PC-9 (cell line): ENCODE measurements at regions of chr17 and their contacts with region 1.

Region 1: DNA sequence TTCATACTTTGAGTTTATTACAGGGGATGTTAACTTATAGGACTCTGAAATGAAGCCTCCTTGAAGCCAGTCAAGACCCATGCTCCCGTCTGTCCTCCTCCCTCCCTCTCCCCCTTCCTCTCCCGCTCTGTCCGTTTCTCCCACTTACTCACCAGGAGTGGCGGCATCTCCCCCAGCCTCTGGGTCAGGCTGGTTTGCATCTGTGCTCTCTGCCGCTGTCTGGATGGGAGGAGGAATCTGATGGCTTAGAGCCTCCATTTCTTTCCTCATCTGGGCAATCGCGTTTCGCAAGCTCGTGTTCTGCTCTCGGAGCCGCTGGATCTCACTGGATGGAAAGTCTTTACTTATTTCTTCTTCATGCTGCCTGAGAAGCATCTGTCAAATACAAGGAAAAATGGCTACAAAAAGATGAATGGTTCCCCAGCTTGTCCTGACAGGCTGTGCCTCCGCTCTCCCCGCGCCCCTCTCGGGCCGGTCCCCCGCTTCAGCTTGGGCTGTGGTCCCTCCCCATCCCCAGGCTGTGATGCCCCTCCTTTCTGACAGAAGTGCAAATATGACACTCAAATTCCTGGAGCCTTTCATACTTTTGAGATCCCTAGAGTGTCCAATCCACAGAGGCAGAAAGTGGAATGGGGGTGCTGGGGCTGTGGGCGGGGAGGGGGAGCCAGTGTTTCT is 40.0 kb downstream of the CCDC57 start:
- DNase-seq: no peak
- H3K4me3 ChIP-seq: no peak overlapping the region
- H3K27ac ChIP-seq: no peak overlapping the region
- H3K4me1 ChIP-seq: no peaks in the 10 kb centered on the region
- H3K27me3 ChIP-seq: no peaks in the 10 kb centered on the region
- CTCF ChIP-seq: no peak

Region 2: GRCh38 chr17:82120148-82120547 is 52.5 kb before region 1 on chr17:
- CTCF ChIA-PET with region 1: no interaction called
- POLR2A ChIA-PET with region 1: no interaction called
- intact Hi-C with region 1: no loop called
- DNase-seq: no peak
- H3K4me3 ChIP-seq: no peak overlapping the region
- H3K27ac ChIP-seq: no peak overlapping the region
- H3K4me1 ChIP-seq: no peaks in the 10 kb centered on the region
- H3K27me3 ChIP-seq: no peaks in the 10 kb centered on the region
- CTCF ChIP-seq: no peak

Region 3: DNA sequence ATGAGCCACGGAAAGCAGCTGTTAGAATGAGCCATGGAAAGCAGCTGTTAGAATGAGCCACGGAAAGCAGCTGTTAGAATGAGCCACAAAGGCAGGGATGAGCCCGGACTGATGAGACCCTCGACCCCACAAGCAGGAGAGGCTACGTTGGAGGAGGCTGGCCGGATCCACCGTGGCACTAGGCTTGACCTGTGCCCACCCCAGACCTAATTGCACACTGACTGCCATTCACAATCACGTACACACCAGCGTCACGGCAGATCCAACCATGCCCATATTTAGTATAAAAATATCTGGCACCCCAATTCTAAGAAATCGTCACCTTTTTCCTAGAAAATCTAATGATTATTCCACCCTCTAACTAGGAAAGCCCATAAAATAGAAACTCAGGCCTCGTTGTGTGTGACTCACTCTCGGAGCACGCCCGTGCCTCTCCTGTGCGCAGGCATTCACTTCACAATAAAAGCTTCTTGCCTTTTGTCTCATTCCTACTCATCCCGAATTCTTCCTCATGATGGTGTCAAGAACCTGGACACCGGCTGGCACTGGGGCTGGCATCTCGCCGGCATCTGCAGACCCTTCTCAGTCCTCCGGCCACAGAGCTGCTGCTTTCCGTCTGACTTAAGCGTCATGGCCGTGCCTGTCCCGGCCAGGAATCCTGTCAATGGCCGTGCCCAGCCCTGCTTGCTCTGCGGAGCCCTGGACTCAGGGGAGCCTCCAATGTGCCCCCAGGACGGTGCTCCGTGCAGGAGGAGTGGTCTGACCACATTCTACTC is 166.4 kb after region 1 on chr17:
- CTCF ChIA-PET with region 1: interaction called, 10 read pairs
- POLR2A ChIA-PET with region 1: no interaction called
- intact Hi-C with region 1: no loop called
- DNase-seq: peak; percentile 58 to 66
- H3K4me3 ChIP-seq: peak overlapping the region; percentile 51; the same call in 1 of the 2 replicates
- H3K27ac ChIP-seq: peak overlapping the region; percentile 6
- H3K4me1 ChIP-seq: peaks cover 11% of the 10 kb centered on the region
- H3K27me3 ChIP-seq: no peaks in the 10 kb centered on the region
- CTCF ChIP-seq: no peak